ENCODE measurements at regions of chr1 and their contacts with region 1.

Region 1: GRCh38 chr1:214414691-214415090 is 133.7 kb downstream of the SMYD2 start:
- DNase-seq: peak; percentile 78
- ATAC-seq: peak; percentile 72
- H3K4me3 ChIP-seq: no peak overlapping the region
- H3K27ac ChIP-seq: no peak overlapping the region
- H3K4me1 ChIP-seq: peaks cover 14% of the 10 kb centered on the region
- H3K27me3 ChIP-seq: no peaks in the 10 kb centered on the region
- CTCF ChIP-seq: no peak
- EP300 ChIP-seq: peak in 1 of 2 experiments; percentile 53; a peak in 2 of 4 replicates
- POLR2A ChIP-seq: no peak
- RAD21 ChIP-seq: no peak

Region 2: GRCh38 chr1:214427871-214428277 is 13.2 kb after region 1 on chr1:
- CTCF ChIA-PET with region 1: no interaction called
- POLR2A ChIA-PET with region 1: no interaction called
- in situ Hi-C with region 1: no loop called
- intact Hi-C with region 1: no loop called
- DNase-seq: peak; percentile 41
- ATAC-seq: peak; percentile 73
- H3K4me3 ChIP-seq: no peak overlapping the region
- H3K27ac ChIP-seq: no peak overlapping the region
- H3K4me1 ChIP-seq: peaks cover 10% of the 10 kb centered on the region
- H3K27me3 ChIP-seq: no peaks in the 10 kb centered on the region; a peak in 1 of 5 replicates
- CTCF ChIP-seq: no peak
- EP300 ChIP-seq: no peak
- POLR2A ChIP-seq: no peak
- RAD21 ChIP-seq: no peak

Region 3: GRCh38 chr1:214446772-214447556 is 32.3 kb after region 1 on chr1:
- CTCF ChIA-PET with region 1: no interaction called
- POLR2A ChIA-PET with region 1: no interaction called
- in situ Hi-C with region 1: no loop called
- intact Hi-C with region 1: loop called (anchors 5 kb)
- DNase-seq: peak; percentile 85
- ATAC-seq: peak; percentile 99
- H3K4me3 ChIP-seq: peak overlapping the region; percentile 41 to 62 (median 56); a peak in 5 of 6 replicates
- H3K27ac ChIP-seq: peak overlapping the region; percentile 28
- H3K4me1 ChIP-seq: peaks cover 20% of the 10 kb centered on the region
- H3K27me3 ChIP-seq: no peaks in the 10 kb centered on the region; a peak in 1 of 5 replicates
- CTCF ChIP-seq: no peak
- EP300 ChIP-seq: 0 out of 4 replicates have a peak, but pooled peaks of 1 of the 2 experiments have one; percentile 17
- POLR2A ChIP-seq: no peak
- RAD21 ChIP-seq: no peak